HepG2 (cell line): ENCODE measurements at regions of chr6 and their contacts with region 1.

Region 1: DNA sequence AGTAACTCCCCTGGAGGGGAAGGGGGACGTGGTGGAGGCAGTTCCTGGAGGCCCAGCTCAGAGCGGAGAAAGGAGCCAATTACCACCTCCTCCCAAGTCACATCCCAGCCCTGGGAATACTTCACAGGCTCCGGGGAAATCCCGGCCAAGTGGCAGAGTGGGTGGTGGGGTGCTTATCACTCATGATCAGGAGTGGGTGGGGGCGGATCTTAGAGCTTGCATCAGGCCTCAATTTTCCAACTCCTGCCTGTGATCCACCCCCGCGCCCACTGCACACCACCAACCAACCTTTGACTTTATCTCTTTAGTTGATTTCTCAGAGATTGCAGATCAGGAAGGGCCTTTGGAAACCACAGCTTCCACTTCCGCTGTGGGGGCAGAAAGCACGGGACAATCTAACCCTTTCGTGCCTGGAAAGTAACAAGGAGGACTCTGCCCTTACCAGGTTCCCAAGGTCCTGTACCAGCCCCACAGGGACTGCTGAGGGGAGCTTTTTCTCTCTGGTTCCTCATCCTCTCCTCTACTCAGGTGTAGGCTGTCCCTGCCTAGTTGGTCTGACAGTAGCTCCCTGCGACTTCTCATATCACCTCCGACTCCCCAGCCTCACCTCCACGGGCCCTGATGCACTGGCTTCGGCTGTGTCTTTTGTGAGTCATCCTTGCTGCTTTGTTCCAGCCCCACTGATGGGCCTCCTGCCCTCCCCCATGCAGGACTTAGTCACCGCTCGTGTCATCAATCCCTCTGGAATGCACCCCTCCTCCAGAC is 24.9 kb upstream of the IER3 start:
- DNase-seq: peak; percentile 96
- ATAC-seq: peak; percentile 90
- H3K4me3 ChIP-seq: peak overlapping the region; percentile 35 to 69 (median 44)
- H3K27ac ChIP-seq: peak overlapping the region; percentile 98
- H3K4me1 ChIP-seq: peaks cover 79% of the 10 kb centered on the region
- H3K27me3 ChIP-seq: no peaks in the 10 kb centered on the region
- CTCF ChIP-seq: no peak; the same call in 1 of the 2 replicates
- EP300 ChIP-seq: peak; percentile 90 to 91
- POLR2A ChIP-seq: peak; percentile 88 to 91
- RAD21 ChIP-seq: peak; percentile 27; the same call in 1 of the 2 replicates

Region 2: DNA sequence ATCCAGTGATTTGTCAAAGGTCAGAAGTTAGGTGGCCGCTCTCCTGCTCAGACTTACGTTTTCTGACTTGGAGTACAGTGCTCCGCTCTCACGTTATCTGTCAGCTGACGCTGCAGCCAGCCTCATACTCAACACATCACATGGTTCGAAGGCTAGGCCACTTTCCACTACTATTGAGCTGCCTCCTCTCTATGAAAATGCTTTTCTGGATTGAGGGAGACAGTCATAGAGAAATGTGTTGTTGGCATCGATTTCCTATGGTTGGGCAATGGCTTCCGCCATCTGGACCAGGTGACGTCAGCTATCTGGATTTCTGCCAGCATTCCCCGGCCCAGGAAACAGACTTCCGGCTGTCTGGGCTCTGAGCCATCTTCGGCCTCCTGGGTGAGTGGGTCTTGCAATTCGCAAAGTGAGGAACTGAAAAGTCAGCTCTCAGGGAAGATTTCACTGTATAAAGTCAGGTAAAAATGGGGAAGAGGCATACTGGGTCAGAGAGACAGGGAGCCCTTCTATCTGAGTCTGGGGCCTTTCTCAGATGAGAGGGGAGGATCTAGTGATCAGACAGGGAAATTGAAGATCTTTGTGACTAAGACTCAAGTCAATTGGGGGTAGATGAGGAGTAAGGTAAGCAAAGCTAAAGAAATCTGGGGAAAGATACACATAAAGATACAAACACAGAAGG is 12.6 kb after region 1 on chr6:
- CTCF ChIA-PET with region 1: no interaction called
- POLR2A ChIA-PET with region 1: interaction called, 305 read pairs
- in situ Hi-C with region 1: no loop called
- intact Hi-C with region 1: loop called (anchors 1 kb)
- DNase-seq: peak; percentile 96
- ATAC-seq: peak; percentile 87
- H3K4me3 ChIP-seq: peak overlapping the region; percentile 39 to 49 (median 43); a peak in 5 of 6 replicates
- H3K27ac ChIP-seq: peak overlapping the region; percentile 83
- H3K4me1 ChIP-seq: peaks cover 86% of the 10 kb centered on the region
- H3K27me3 ChIP-seq: no peaks in the 10 kb centered on the region
- CTCF ChIP-seq: 0 out of 2 replicates have a peak, but pooled peaks have one; percentile 12
- EP300 ChIP-seq: peak; percentile 90 to 93
- POLR2A ChIP-seq: peak; percentile 20 to 34; a peak in 2 of 4 replicates
- RAD21 ChIP-seq: peak; percentile 20; the same call in 1 of the 2 replicates

Region 3: GRCh38 chr6:30787954-30788353 is 18.7 kb after region 1 on chr6:
- CTCF ChIA-PET with region 1: no interaction called
- POLR2A ChIA-PET with region 1: interaction called, 305 read pairs
- in situ Hi-C with region 1: no loop called
- intact Hi-C with region 1: no loop called
- DNase-seq: peak; percentile 88
- ATAC-seq: peak; percentile 88
- H3K4me3 ChIP-seq: no peak overlapping the region
- H3K27ac ChIP-seq: peak overlapping the region; percentile 53
- H3K4me1 ChIP-seq: peaks cover 71% of the 10 kb centered on the region
- H3K27me3 ChIP-seq: no peaks in the 10 kb centered on the region
- CTCF ChIP-seq: no peak
- EP300 ChIP-seq: peak; percentile 43 to 70; a peak in 2 of 4 replicates
- POLR2A ChIP-seq: no peak
- RAD21 ChIP-seq: no peak

Region 4: DNA sequence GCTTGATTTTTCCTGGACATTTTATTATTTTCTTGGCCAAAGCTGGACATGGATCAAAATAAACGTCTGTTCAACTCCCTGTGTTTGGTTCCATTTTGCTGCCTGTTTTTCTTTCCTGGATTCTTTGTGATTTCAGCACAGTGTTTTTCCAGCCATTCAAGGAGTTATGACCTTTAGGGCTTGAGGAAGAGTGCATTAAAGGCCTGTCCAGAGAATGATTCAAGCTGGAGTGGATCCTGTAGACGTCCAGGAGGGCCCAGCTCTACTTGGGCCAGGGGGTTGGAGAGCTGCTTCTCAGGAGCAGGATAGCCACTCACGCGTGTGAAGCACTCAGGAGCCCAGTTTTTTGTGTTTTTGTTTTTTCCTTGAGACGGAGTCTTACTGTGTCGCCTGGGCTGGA is 31.6 kb after region 1 on chr6:
- CTCF ChIA-PET with region 1: no interaction called
- POLR2A ChIA-PET with region 1: interaction called, 12 read pairs
- in situ Hi-C with region 1: no loop called
- intact Hi-C with region 1: no loop called
- DNase-seq: no peak
- ATAC-seq: no peak
- H3K4me3 ChIP-seq: no peak overlapping the region
- H3K27ac ChIP-seq: peak overlapping the region; percentile 10
- H3K4me1 ChIP-seq: peaks cover 71% of the 10 kb centered on the region
- H3K27me3 ChIP-seq: no peaks in the 10 kb centered on the region
- CTCF ChIP-seq: no peak
- EP300 ChIP-seq: no peak; a peak in 1 of 4 replicates
- POLR2A ChIP-seq: no peak
- RAD21 ChIP-seq: no peak

Region 5: DNA sequence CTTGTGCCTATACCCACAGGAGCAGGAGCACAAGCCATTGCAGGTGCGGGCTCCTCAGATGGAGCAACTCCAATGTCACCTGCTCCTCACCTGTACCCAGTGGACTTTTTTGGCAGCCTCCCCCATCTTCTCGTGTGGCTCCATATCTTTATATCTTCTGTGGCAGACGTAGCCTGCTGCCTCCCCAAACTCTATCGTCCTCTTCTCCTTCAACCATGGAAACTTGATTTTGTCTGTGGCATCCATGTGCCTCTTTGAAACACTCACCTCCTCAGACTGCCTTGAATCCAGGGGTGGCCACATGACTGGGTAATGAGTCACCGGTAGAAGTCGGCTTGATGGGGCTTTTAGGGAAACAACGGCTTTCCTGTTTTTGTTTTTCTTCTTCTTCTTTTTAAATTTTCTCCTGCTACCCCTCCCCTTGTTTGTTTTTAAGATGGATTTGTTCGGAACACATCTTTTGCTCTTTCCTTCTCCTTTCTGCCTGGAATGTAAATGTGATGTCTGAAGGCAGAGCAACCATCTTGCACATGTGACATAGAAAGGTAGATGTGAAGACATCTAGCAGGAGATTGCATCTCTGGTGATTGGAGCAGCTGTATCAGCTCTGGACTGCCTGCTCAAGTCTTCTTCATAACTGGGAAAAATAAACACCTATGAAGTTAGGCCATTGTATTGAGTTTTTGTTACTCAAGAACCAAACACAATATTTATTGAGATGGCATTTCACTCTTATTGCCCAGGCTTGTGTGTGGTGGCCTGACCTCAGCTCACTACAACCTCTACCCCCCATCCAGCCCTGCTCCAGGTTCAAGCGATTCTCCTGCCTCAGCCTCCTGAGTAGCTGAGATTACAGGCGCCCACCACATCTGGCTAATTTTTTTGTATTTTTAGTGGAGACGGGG is 45.1 kb after region 1 on chr6:
- CTCF ChIA-PET with region 1: no interaction called
- POLR2A ChIA-PET with region 1: interaction called, 24 read pairs
- in situ Hi-C with region 1: no loop called
- intact Hi-C with region 1: no loop called
- DNase-seq: no peak
- ATAC-seq: peak; percentile 62
- H3K4me3 ChIP-seq: no peak overlapping the region
- H3K27ac ChIP-seq: no peak overlapping the region
- H3K4me1 ChIP-seq: peaks cover 45% of the 10 kb centered on the region
- H3K27me3 ChIP-seq: no peaks in the 10 kb centered on the region
- CTCF ChIP-seq: no peak
- EP300 ChIP-seq: peak in 1 of 2 experiments; percentile 31; a peak in 1 of 4 replicates
- POLR2A ChIP-seq: no peak
- RAD21 ChIP-seq: no peak

Region 6: GRCh38 chr6:30821862-30822782 is 52.9 kb after region 1 on chr6:
- CTCF ChIA-PET with region 1: no interaction called
- POLR2A ChIA-PET with region 1: interaction called, 29 read pairs
- in situ Hi-C with region 1: no loop called
- intact Hi-C with region 1: loop called (anchors 1 kb)
- DNase-seq: peak; percentile 70
- ATAC-seq: peak; percentile 49
- H3K4me3 ChIP-seq: peak overlapping the region in 2 of 3 experiments; percentile 20 to 35; a peak in 3 of 6 replicates
- H3K27ac ChIP-seq: peak overlapping the region; percentile 79
- H3K4me1 ChIP-seq: peaks cover 71% of the 10 kb centered on the region
- H3K27me3 ChIP-seq: no peaks in the 10 kb centered on the region
- CTCF ChIP-seq: peak; percentile 55
- EP300 ChIP-seq: no peak
- POLR2A ChIP-seq: no peak
- RAD21 ChIP-seq: peak; percentile 30; the same call in 1 of the 2 replicates

Region 7: DNA sequence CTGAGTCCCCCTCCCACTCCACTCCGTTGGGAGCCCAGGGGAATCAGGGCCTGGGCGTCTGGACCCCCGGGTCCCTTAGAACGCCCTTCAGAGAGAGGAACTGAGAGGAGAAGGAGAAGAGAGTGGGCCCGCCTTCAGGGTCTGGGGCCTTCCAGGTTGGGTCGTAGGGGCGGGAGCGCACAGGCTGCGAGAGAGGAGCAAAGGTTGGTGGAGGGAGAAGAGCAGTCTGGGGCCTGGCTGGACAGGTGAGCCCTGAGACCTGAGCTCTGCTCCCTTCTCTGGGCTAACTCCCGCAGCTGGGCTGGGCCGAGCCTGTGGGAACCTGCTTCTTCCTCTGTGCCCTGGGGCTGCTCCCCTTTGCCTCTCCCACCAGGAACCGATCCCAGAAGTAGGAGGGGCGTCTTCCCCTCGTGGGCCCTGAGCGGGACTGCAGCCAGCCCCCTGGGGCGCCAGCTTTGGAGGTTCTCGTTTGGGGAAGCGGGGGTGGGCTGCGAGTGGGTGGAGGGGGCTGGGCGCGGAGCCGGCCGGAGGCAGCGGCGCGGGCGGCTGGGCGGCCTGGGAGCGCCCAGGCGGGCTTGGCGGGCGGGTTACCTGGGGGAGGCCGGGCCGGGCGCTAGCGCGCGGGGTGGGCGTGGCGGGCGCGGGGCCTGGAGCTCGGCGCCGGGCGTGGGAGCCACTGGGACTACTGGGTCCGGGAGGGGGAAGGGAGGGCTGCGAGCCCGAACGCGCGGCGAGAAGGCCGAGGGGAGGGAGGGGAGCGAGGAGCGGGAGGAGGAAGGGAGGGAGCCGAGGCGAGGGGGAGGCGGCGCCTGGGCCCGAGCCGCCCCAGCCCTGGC is 114.6 kb after region 1 on chr6 and contains the start of gene DDR1:
- CTCF ChIA-PET with region 1: no interaction called
- POLR2A ChIA-PET with region 1: interaction called, 10 read pairs
- in situ Hi-C with region 1: no loop called
- intact Hi-C with region 1: no loop called
- DNase-seq: peak; percentile 38
- ATAC-seq: peak; percentile 57
- H3K4me3 ChIP-seq: peak within 1 kb of the TSS; percentile 80 to 91 (median 82)
- H3K27ac ChIP-seq: peak within 1 kb of the TSS; percentile 44
- H3K4me1 ChIP-seq: peaks cover 56% of the 10 kb centered on the region
- H3K27me3 ChIP-seq: peaks cover 6 to 27% of the 10 kb centered on the region in 2 experiments
- CTCF ChIP-seq: no peak
- EP300 ChIP-seq: no peak
- POLR2A ChIP-seq: no peak
- RAD21 ChIP-seq: no peak
- total RNA-seq, gene DDR1: 7.0 and 16.7 TPM in 2 replicates